ENCODE measurements at regions of chr9 and their contacts with region 1.

Region 1: GRCh38 chr9:129401628-129402370 is 219.1 kb downstream of the C9orf50 start:
- DNase-seq: no peak
- H3K4me3 ChIP-seq: peak overlapping the region in 1 of 4 experiments; percentile 45; a peak in 2 of 8 replicates
- H3K27ac ChIP-seq: no peak overlapping the region
- H3K4me1 ChIP-seq: peaks cover 5 to 50% (median 20%) of the 10 kb centered on the region in 4 experiments
- H3K27me3 ChIP-seq: peaks cover 0 to 3% (median 0%) of the 10 kb centered on the region in 4 experiments; a peak in 1 of 7 replicates
- CTCF ChIP-seq: no peak
- EP300 ChIP-seq: no peak
- POLR2A ChIP-seq: no peak
- RAD21 ChIP-seq: no peak; a peak in 1 of 4 replicates

Region 2: GRCh38 chr9:129383561-129384416 is 18.0 kb before region 1 on chr9:
- CTCF ChIA-PET with region 1: interaction called, 3 read pairs
- POLR2A ChIA-PET with region 1: interaction called, 11 read pairs
- DNase-seq: no peak
- H3K4me3 ChIP-seq: peak overlapping the region; percentile 35 to 72 (median 48)
- H3K27ac ChIP-seq: no peak overlapping the region
- H3K4me1 ChIP-seq: peaks cover 5 to 18% (median 14%) of the 10 kb centered on the region in 4 experiments
- H3K27me3 ChIP-seq: peaks cover 0 to 13% (median 9%) of the 10 kb centered on the region in 4 experiments; a peak in 4 of 7 replicates
- CTCF ChIP-seq: no peak
- EP300 ChIP-seq: no peak
- POLR2A ChIP-seq: no peak
- RAD21 ChIP-seq: peak in 1 of 2 experiments; percentile 1; a peak in 1 of 4 replicates

Measured in H1 (cell line).